K562 (cell line): ENCODE measurements at regions of chr7 and their contacts with region 1.

Region 1: GRCh38 chr7:43764039-43764761 is 5.7 kb downstream of the BLVRA start:
- DNase-seq: peak; percentile 55 to 85 (median 67)
- ATAC-seq: peak; percentile 77
- H3K4me3 ChIP-seq: peak overlapping the region; percentile 14; the same call in 1 of the 2 replicates
- H3K27ac ChIP-seq: peak overlapping the region; percentile 42; the same call in 2 of the 3 replicates
- H3K4me1 ChIP-seq: peaks cover 32 to 61% of the 10 kb centered on the region in 2 experiments
- H3K27me3 ChIP-seq: no peaks in the 10 kb centered on the region
- CTCF ChIP-seq: no peak
- EP300 ChIP-seq: no peak; the same call in 1 of the 2 replicates
- POLR2A ChIP-seq: no peak
- RAD21 ChIP-seq: no peak

Region 2: GRCh38 chr7:43454936-43455518 is 309.2 kb before region 1 on chr7:
- CTCF ChIA-PET with region 1: no interaction called
- POLR2A ChIA-PET with region 1: no interaction called
- in situ Hi-C with region 1: no loop called
- intact Hi-C with region 1: no loop called
- DNase-seq: peak; percentile 28 to 45 (median 36)
- ATAC-seq: peak; percentile 70; the same call in 2 of the 3 replicates
- H3K4me3 ChIP-seq: no peak overlapping the region
- H3K27ac ChIP-seq: no peak overlapping the region
- H3K4me1 ChIP-seq: no peaks in the 10 kb centered on the region; a peak in 1 of 5 replicates
- H3K27me3 ChIP-seq: peaks cover 20 to 21% of the 10 kb centered on the region in 2 experiments; a peak in 4 of 5 replicates
- CTCF ChIP-seq: peak; percentile 39 to 73 (median 51); a peak in 5 of 6 replicates
- EP300 ChIP-seq: no peak
- POLR2A ChIP-seq: no peak
- RAD21 ChIP-seq: peak; percentile 28 to 55; a peak in 3 of 4 replicates

Region 3: GRCh38 chr7:43729214-43729923 is 34.8 kb before region 1 on chr7 and contains the start of gene COA1:
- CTCF ChIA-PET with region 1: no interaction called
- POLR2A ChIA-PET with region 1: interaction called, 32 read pairs
- in situ Hi-C with region 1: no loop called
- intact Hi-C with region 1: loop called (anchors 5 kb)
- DNase-seq: peak; percentile 76 to 96 (median 84)
- ATAC-seq: peak; percentile 85
- H3K4me3 ChIP-seq: peak within 1 kb of the TSS; percentile 61
- H3K27ac ChIP-seq: peak within 1 kb of the TSS; percentile 80
- H3K4me1 ChIP-seq: peaks cover 9 to 11% of the 10 kb centered on the region in 2 experiments
- H3K27me3 ChIP-seq: no peaks in the 10 kb centered on the region
- CTCF ChIP-seq: no peak
- EP300 ChIP-seq: peak; percentile 56; the same call in 1 of the 2 replicates
- POLR2A ChIP-seq: peak; percentile 95
- RAD21 ChIP-seq: 0 out of 4 replicates have a peak, but pooled peaks of 1 of the 2 experiments have one; percentile 13
- polyA plus RNA-seq, gene COA1: 432 to 463 TPM

Region 4: GRCh38 chr7:43779032-43779812 is 15.0 kb after region 1 on chr7:
- CTCF ChIA-PET with region 1: no interaction called
- POLR2A ChIA-PET with region 1: interaction called, 4 read pairs
- in situ Hi-C with region 1: no loop called
- intact Hi-C with region 1: loop called (anchors 2 kb)
- DNase-seq: peak; percentile 60 to 85 (median 74)
- ATAC-seq: peak; percentile 98
- H3K4me3 ChIP-seq: no peak overlapping the region
- H3K27ac ChIP-seq: peak overlapping the region; percentile 67
- H3K4me1 ChIP-seq: peaks cover 11 to 16% of the 10 kb centered on the region in 2 experiments; a peak in 3 of 5 replicates
- H3K27me3 ChIP-seq: no peaks in the 10 kb centered on the region
- CTCF ChIP-seq: no peak
- EP300 ChIP-seq: peak; percentile 49; the same call in 1 of the 2 replicates
- POLR2A ChIP-seq: no peak
- RAD21 ChIP-seq: no peak

Region 5: DNA sequence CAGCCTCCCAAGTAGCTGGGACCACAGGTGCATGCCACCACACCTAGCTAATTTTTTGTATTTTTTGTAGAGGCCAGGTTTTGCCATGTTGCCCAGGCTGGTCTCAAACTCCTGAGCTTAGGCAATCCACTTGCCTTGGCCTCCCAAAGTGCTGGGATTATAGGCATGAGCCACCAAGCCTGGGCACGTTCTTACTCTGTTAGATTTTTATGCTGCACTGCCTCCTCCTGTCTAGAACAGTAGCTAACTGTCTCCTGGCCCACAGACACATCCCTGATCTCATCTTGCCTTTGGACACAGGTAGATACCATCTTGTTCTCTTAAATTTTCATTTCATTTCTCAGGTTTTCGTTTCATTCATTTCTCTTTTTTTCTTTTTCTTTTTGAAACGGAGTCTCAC is 35.4 kb after region 1 on chr7:
- CTCF ChIA-PET with region 1: no interaction called
- POLR2A ChIA-PET with region 1: interaction called, 3 read pairs
- in situ Hi-C with region 1: no loop called
- intact Hi-C with region 1: loop called (anchors 5 kb)
- DNase-seq: peak in 1 of 4 experiments; percentile 18
- ATAC-seq: peak; percentile 86
- H3K4me3 ChIP-seq: no peak overlapping the region
- H3K27ac ChIP-seq: no peak overlapping the region
- H3K4me1 ChIP-seq: no peaks in the 10 kb centered on the region
- H3K27me3 ChIP-seq: no peaks in the 10 kb centered on the region
- CTCF ChIP-seq: peak in 2 of 3 experiments; percentile 29 to 49; a peak in 2 of 6 replicates
- EP300 ChIP-seq: no peak
- POLR2A ChIP-seq: no peak
- RAD21 ChIP-seq: peak in 1 of 2 experiments; percentile 55; a peak in 2 of 4 replicates

Region 6: GRCh38 chr7:43808135-43808809 is 44.1 kb after region 1 on chr7:
- CTCF ChIA-PET with region 1: no interaction called
- POLR2A ChIA-PET with region 1: interaction called, 3 read pairs
- in situ Hi-C with region 1: no loop called
- intact Hi-C with region 1: loop called (anchors 5 kb)
- DNase-seq: no peak
- ATAC-seq: no peak
- H3K4me3 ChIP-seq: no peak overlapping the region
- H3K27ac ChIP-seq: no peak overlapping the region
- H3K4me1 ChIP-seq: peaks cover 0 to 3% of the 10 kb centered on the region in 2 experiments; a peak in 2 of 5 replicates
- H3K27me3 ChIP-seq: no peaks in the 10 kb centered on the region
- CTCF ChIP-seq: no peak
- EP300 ChIP-seq: no peak
- POLR2A ChIP-seq: no peak
- RAD21 ChIP-seq: no peak